Activated CD4-positive, alpha-beta memory T cell treated with anti-CD3 and anti-CD28 coated beads for 36 hours (primary cell): ENCODE measurements at regions of chr10 and their contacts with region 1.

Region 1: GRCh38 chr10:15433850-15434537 is 62.9 kb upstream of the FAM171A1 start:
- DNase-seq: peak; percentile 14
- H3K4me3 Mint-ChIP-seq: peak overlapping the region; percentile 48
- H3K27ac Mint-ChIP-seq: no peak overlapping the region
- H3K4me1 Mint-ChIP-seq: peaks cover 3% of the 10 kb centered on the region
- H3K27me3 Mint-ChIP-seq: peaks cover 17% of the 10 kb centered on the region

Region 2: DNA sequence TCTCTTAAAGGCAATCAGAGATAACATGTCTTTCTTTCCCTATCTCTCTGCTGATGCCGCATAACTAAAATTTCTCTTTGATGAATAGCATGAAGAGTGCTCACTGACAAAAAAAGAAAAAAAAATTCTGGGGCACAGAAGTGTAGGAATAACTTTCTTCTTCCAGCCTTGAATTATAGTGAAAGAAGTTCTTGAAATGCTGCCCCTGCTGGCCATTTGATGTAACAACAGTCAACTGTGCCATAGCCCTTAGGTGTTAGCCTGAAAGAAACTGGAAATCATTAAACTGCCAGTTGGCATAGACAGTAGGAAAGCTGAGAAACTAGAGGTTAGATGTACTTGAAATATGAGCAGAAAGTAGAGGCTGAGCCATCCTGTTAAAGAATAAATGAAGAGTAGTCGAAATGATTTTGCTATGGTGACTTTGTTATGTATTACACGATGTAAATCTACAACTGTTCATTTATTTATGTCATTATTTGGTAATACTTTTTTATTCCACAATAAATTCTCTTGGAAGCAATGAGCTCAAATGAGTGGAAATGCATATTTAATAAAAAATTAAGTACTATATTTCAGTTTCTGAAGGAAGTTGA is 14.6 kb before region 1 on chr10:
- CTCF ChIA-PET with region 1: interaction called, 11 read pairs
- POLR2A ChIA-PET with region 1: no interaction called
- intact Hi-C with region 1: no loop called
- DNase-seq: peak; percentile 24
- H3K4me3 Mint-ChIP-seq: no peak overlapping the region
- H3K27ac Mint-ChIP-seq: no peak overlapping the region
- H3K4me1 Mint-ChIP-seq: no peaks in the 10 kb centered on the region
- H3K27me3 Mint-ChIP-seq: peaks cover 5% of the 10 kb centered on the region

Region 3: DNA sequence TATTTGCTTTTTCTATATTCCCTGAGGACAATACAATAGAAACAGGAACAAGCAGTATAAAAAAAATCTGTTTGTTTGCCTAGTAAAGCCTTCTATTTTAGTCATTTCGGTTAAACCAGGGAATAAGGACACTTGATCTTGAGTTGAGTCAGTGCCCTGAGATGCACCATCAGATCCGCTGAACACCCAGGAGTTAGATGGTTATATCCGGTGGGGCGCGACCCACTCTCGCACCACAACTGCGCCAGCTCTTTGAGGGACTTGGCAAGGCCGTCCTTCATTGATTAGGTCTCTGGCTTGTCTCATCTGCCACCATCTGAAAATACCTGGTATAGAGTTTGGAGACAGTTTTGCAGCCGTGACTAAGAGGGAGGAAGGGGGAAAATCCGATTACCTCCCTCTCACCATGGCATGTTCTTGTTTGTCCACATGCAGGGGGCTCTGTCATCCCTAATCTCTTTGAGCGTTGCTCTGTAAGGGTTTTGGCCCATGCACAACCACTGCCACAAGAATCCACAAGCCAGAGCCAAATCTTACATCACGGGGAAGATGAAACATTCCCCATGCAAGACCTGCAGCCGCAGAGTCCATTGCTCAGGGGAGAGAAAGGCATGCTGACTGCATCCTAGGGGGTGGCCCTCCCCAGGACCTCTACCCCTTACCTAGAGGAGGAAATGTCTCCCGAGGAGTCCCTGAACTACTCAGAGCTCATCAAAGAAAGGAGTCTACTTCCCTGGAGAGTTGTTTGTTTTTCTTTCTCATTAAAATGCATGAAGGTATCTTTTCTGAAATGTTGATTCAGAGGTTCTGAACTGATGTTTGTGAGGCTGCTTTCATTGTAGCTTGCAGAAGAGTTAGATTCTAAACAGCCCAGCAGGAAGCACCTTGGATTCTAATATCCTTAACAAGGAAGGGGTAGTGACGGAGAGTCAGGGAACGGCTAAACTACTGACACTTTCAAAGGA is 38.7 kb after region 1 on chr10:
- CTCF ChIA-PET with region 1: no interaction called
- POLR2A ChIA-PET with region 1: no interaction called
- intact Hi-C with region 1: no loop called
- DNase-seq: no peak
- H3K4me3 Mint-ChIP-seq: no peak overlapping the region
- H3K27ac Mint-ChIP-seq: no peak overlapping the region
- H3K4me1 Mint-ChIP-seq: no peaks in the 10 kb centered on the region
- H3K27me3 Mint-ChIP-seq: peaks cover 31% of the 10 kb centered on the region

Region 4: DNA sequence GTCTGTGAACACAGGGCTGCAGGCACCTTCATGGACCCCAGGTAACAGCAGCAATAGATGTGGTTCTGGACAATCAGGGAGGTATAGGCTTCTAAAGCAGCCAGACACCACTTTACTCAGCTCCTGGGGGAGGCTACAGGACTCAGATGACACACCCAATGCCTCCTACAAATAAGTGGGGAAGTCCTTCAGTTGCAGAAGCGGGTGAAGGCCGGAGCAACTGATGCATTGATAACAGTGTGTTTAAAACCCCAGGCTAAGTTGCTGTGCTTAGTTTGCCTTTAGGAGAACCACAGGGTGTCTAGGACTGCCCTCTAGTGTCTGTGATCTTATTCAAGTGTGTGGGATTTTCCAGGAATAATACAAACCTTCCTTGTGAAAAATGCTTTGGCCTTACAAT is 291.6 kb after region 1 on chr10:
- CTCF ChIA-PET with region 1: interaction called, 4 read pairs
- POLR2A ChIA-PET with region 1: no interaction called
- intact Hi-C with region 1: loop called (anchors 5 kb)
- DNase-seq: no peak
- H3K4me3 Mint-ChIP-seq: no peak overlapping the region
- H3K27ac Mint-ChIP-seq: no peak overlapping the region
- H3K4me1 Mint-ChIP-seq: no peaks in the 10 kb centered on the region
- H3K27me3 Mint-ChIP-seq: peaks cover 15% of the 10 kb centered on the region

Region 5: GRCh38 chr10:15744217-15744865 is 310.3 kb after region 1 on chr10:
- CTCF ChIA-PET with region 1: interaction called, 3 read pairs
- POLR2A ChIA-PET with region 1: no interaction called
- intact Hi-C with region 1: loop called (anchors 5 kb)
- DNase-seq: peak; percentile 50
- H3K4me3 Mint-ChIP-seq: no peak overlapping the region
- H3K27ac Mint-ChIP-seq: no peak overlapping the region
- H3K4me1 Mint-ChIP-seq: no peaks in the 10 kb centered on the region
- H3K27me3 Mint-ChIP-seq: peaks cover 5% of the 10 kb centered on the region

Region 6: DNA sequence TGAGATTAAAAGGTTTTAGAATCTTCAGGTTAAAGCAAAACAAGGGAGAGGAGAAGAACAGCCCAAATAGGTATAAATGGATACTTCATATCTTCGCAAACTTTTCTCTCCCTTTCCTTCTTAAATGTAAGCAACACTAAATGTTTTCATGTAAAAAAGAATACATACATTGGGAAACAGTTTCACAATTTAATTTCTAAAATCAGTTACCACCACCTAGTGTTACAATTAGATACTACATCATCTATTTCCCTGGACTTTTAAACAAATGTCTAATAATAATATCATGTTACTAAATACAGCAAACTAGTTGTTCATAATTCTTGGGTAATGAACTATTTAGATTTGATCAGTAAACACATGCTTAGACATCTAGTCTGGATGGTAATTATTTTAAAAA is 390.5 kb after region 1 on chr10:
- CTCF ChIA-PET with region 1: no interaction called
- POLR2A ChIA-PET with region 1: no interaction called
- intact Hi-C with region 1: loop called (anchors 10 kb)
- DNase-seq: no peak
- H3K4me3 Mint-ChIP-seq: no peak overlapping the region
- H3K27ac Mint-ChIP-seq: no peak overlapping the region
- H3K4me1 Mint-ChIP-seq: peaks cover under 1% of the 10 kb centered on the region
- H3K27me3 Mint-ChIP-seq: no peaks in the 10 kb centered on the region